ENCODE measurements at regions of chr9 and their contacts with region 1.

Region 1: GRCh38 chr9:34701769-34702736 is 7.9 kb downstream of the CCL21 start:
- DNase-seq: peak; percentile 69
- H3K4me3 Mint-ChIP-seq: peak overlapping the region; percentile 59
- H3K27ac Mint-ChIP-seq: no peak overlapping the region
- H3K4me1 Mint-ChIP-seq: no peaks in the 10 kb centered on the region
- H3K27me3 Mint-ChIP-seq: peaks cover 13% of the 10 kb centered on the region
- CTCF ChIP-seq: peak; percentile 96

Region 2: DNA sequence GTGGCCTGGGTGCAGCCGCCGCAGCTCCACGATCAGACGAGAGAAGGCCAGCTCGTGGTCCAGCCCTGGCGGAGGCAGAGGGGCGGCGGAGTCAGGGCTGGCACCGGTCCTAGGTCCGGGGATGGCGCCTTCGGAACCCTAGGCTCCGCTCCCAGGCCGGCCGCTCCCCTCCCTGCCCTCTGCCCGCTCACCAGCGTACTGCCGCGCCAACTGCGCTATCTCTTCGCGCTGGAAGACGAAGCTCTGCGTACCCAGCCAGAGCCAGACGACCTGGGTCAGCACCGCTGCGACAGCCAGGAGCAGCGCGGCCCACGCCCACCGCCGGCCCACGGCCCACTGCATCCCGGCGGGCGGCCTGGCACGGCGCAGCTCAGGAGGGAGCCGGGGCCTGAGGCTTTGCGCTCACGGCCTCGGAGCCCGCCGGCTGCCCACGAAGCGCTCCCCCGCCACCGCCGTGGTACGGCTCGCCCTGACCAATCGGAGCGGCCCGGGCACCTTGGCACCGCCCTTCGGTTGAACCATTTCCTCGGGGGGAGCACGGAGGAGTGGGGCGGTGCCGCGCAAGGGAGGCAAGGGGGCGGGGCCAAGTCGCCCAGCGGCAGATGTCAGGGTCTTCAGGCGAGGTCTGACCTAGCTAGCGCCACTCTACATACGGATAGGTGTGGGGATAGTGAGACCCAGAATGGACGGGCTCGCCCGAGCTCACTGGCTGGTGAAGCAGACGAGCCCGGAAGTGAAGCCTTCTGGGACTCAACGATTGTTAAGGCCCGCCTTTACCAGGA is 64.5 kb before region 1 on chr9 and contains the start of gene SIGMAR1:
- CTCF ChIA-PET with region 1: interaction called, 12 read pairs
- POLR2A ChIA-PET with region 1: interaction called, 7 read pairs
- intact Hi-C with region 1: no loop called
- DNase-seq: peak; percentile 93
- H3K4me3 Mint-ChIP-seq: peak within 1 kb of the TSS; percentile 92
- H3K27ac Mint-ChIP-seq: peak within 1 kb of the TSS; percentile 97
- H3K4me1 Mint-ChIP-seq: peaks cover 31% of the 10 kb centered on the region
- H3K27me3 Mint-ChIP-seq: no peaks in the 10 kb centered on the region
- CTCF ChIP-seq: no peak
- total RNA-seq, gene SIGMAR1: 82.1 and 99.8 TPM in 2 replicates

Region 3: DNA sequence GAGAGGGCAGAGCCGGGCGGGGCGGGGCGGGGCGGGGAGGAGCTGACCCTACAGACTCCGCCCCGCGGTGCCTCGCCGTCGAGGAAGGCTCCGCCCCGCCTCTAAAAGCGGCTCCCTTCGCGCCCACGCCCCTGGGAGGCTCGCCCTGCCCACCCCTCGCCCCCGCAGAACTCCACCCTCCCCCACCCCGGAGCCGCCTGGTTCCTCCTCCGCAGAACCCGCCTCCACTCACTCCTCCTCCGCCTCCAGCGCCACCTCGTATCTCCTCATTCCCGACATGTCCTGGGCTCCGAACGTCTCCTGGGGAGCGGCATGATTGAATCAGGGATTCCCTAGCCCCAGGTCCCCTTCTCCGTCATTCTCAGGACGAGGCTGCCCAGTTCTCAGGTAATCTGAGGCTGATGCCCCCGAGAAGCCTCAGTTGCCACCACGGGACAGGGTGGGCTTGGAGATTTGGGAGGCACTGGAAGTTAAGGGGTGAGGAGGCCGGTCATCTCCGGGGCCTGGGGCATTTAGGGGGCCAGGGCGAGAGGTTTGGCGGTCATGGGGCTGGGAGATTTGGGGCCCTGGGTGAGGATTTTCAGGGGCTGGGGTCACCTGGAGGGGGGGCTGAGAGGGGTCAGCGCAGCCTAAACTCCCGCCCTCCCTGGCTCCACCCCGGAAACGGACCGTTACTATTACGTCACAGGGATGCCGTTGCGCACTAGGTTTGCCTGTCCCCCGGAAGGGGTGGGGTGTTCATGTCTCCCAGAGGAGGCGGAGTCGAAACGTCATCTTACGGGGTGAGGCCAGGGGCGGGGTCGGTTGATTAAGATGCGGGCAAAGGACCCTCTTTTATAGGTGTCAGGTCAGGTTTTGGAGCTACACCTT is 36.4 kb before region 1 on chr9:
- CTCF ChIA-PET with region 1: interaction called, 5 read pairs
- POLR2A ChIA-PET with region 1: no interaction called
- intact Hi-C with region 1: loop called (anchors 1 kb)
- DNase-seq: peak; percentile 94
- H3K4me3 Mint-ChIP-seq: peak overlapping the region; percentile 92
- H3K27ac Mint-ChIP-seq: peak overlapping the region; percentile 96
- H3K4me1 Mint-ChIP-seq: peaks cover 17% of the 10 kb centered on the region
- H3K27me3 Mint-ChIP-seq: no peaks in the 10 kb centered on the region
- CTCF ChIP-seq: no peak

Region 4: GRCh38 chr9:34690983-34691935 is 10.8 kb before region 1 on chr9 and contains the start of gene CCL19:
- CTCF ChIA-PET with region 1: interaction called, 11 read pairs
- POLR2A ChIA-PET with region 1: interaction called, 4 read pairs
- intact Hi-C with region 1: no loop called
- DNase-seq: no peak
- H3K4me3 Mint-ChIP-seq: no peak within 1 kb of the TSS
- H3K27ac Mint-ChIP-seq: no peak within 1 kb of the TSS
- H3K4me1 Mint-ChIP-seq: no peaks in the 10 kb centered on the region
- H3K27me3 Mint-ChIP-seq: no peaks in the 10 kb centered on the region
- CTCF ChIP-seq: no peak
- total RNA-seq, gene CCL19: not detected in 2 replicates

Region 5: DNA sequence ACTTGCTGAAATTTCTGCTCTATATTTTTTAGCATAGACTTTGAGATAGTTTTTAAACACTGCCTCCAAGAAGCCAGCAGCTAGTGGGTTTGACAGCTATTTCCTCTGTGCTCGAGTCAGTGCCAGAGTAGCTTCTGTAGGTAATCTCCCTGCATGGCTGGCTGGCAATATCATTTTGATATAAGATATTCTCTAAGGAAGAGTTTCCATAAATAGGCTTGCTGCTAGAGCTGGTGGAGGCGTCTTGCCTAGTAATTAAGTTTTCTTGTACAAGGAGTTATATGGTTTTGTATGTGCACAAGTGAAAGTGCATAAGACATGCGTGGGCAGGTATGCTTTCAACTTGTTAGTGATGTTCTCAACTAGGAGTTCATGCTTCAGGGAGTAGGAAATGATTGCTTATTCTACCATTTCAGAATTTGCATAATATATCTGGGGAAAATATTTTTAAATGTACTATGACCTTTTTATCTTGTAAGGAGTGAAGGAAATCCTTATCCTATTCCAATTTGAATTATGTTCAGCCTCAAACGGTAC is 82.0 kb after region 1 on chr9:
- CTCF ChIA-PET with region 1: no interaction called
- POLR2A ChIA-PET with region 1: no interaction called
- intact Hi-C with region 1: no loop called
- DNase-seq: no peak
- H3K4me3 Mint-ChIP-seq: no peak overlapping the region
- H3K27ac Mint-ChIP-seq: no peak overlapping the region
- H3K4me1 Mint-ChIP-seq: no peaks in the 10 kb centered on the region
- H3K27me3 Mint-ChIP-seq: peaks cover 17% of the 10 kb centered on the region
- CTCF ChIP-seq: no peak

Region 6: DNA sequence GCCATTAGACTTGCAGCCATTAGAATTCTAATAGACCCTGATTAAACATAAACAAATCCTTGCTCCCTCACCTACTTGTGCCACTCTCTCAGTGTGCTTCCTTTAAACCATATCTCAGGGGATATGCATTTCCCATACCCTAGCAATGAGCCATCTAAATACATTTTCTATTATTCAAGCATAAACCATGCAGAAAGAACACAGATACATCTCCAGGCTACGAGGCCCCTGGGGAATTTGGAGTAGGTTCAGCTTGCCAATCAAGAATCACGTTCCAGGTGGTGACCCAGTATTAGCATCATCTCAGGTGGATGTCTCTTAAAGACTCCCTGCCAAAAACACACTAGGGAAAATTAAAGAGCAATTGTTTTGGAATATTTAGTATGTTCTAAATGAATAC is 100.9 kb after region 1 on chr9:
- CTCF ChIA-PET with region 1: no interaction called
- POLR2A ChIA-PET with region 1: no interaction called
- intact Hi-C with region 1: no loop called
- DNase-seq: no peak
- H3K4me3 Mint-ChIP-seq: no peak overlapping the region
- H3K27ac Mint-ChIP-seq: no peak overlapping the region
- H3K4me1 Mint-ChIP-seq: no peaks in the 10 kb centered on the region
- H3K27me3 Mint-ChIP-seq: peaks cover 73% of the 10 kb centered on the region
- CTCF ChIP-seq: no peak

Measured in MCF 10A (cell line).